Ascending aorta (tissue), 2 donors: ENCODE measurements at regions of chr17 and their contacts with region 1.

Region 1: DNA sequence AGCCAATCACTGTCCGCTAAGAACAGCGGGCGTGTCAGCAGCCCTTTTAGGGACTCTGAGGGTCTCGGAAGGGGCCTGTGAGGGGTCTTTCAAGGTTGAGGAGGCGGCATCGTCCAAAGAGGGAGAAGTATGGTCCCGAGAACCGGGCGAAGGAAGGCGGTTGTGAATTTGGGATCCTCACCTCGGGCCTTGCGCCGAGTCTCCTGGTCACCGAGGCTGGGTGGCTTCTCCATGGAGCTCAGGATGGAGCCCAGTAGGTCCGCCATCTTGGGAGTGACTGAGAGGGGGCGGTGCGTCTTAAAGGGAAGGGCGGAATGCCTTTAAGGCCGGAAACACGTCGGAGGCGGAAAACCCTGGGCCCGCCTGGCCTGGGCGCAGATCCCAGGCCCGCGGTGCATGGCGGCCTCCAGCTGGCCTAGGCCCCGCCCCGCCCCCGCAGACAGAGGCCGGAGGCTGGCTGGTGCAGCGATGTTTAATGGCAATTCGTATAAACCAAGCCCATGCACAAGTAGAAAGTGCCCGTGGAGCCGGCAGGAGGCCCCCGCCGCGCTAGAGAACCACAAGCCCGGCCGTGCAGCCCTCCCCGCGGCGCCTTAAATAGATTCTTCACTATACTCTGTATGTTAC is at the start of gene SPAG7:
- DNase-seq: peak; percentile 63 to 96
- H3K4me3 ChIP-seq: peak within 1 kb of the TSS; percentile 77 to 78
- H3K27ac ChIP-seq: peak within 1 kb of the TSS; percentile 94
- H3K4me1 ChIP-seq: peaks cover 9 to 25% of the 10 kb centered on the region in 2 donors
- H3K27me3 ChIP-seq: no peaks in the 10 kb centered on the region
- CTCF ChIP-seq: peak in 1 of 3 experiments; percentile 3
- total RNA-seq, gene SPAG7: 4.9 TPM

Region 2: GRCh38 chr17:4908301-4908700 is 59.4 kb before region 1 on chr17:
- intact Hi-C with region 1: loop called (anchors 1 kb)
- DNase-seq: no peak
- H3K4me3 ChIP-seq: no peak overlapping the region
- H3K27ac ChIP-seq: peak overlapping the region in 1 of 2 donors; percentile 49
- H3K4me1 ChIP-seq: peaks cover 0 to 8% of the 10 kb centered on the region in 2 donors
- H3K27me3 ChIP-seq: no peaks in the 10 kb centered on the region
- CTCF ChIP-seq: no peak

Region 3: GRCh38 chr17:4948931-4949320 is 18.7 kb before region 1 on chr17:
- intact Hi-C with region 1: loop called (anchors 1 kb)
- DNase-seq: peak; percentile 32 to 91
- H3K4me3 ChIP-seq: peak overlapping the region; percentile 94 to 100
- H3K27ac ChIP-seq: peak overlapping the region; percentile 93 to 99
- H3K4me1 ChIP-seq: peaks cover 15 to 55% of the 10 kb centered on the region in 2 donors
- H3K27me3 ChIP-seq: no peaks in the 10 kb centered on the region
- CTCF ChIP-seq: no peak

Region 4: GRCh38 chr17:4997302-4998026 is 29.8 kb after region 1 on chr17 and contains the starts of genes INCA1 and KIF1C:
- intact Hi-C with region 1: loop called (anchors 1 kb)
- DNase-seq: peak; percentile 56 to 95
- H3K4me3 ChIP-seq: peak within 1 kb of the TSS; percentile 80 to 99
- H3K27ac ChIP-seq: peak within 1 kb of the TSS; percentile 94 to 95
- H3K4me1 ChIP-seq: peaks cover 6 to 17% of the 10 kb centered on the region in 2 donors
- H3K27me3 ChIP-seq: no peaks in the 10 kb centered on the region
- CTCF ChIP-seq: peak in 2 of 3 experiments; percentile 12 to 42
- total RNA-seq, gene INCA1: not detected
- total RNA-seq, gene KIF1C: 94.0 TPM